ENCODE measurements at regions of chr5 and their contacts with region 1.

Region 1: GRCh38 chr5:91419571-91420537 is 36.7 kb upstream of the ARRDC3 start:
- DNase-seq: peak; percentile 74
- H3K4me3 Mint-ChIP-seq: no peak overlapping the region
- H3K27ac Mint-ChIP-seq: no peak overlapping the region
- H3K4me1 Mint-ChIP-seq: no peaks in the 10 kb centered on the region
- H3K27me3 Mint-ChIP-seq: no peaks in the 10 kb centered on the region

Region 2: GRCh38 chr5:90740244-90740799 is 679.5 kb before region 1 on chr5:
- CTCF ChIA-PET with region 1: no interaction called
- POLR2A ChIA-PET with region 1: no interaction called
- intact Hi-C with region 1: no loop called
- DNase-seq: no peak
- H3K4me3 Mint-ChIP-seq: no peak overlapping the region
- H3K27ac Mint-ChIP-seq: no peak overlapping the region
- H3K4me1 Mint-ChIP-seq: no peaks in the 10 kb centered on the region
- H3K27me3 Mint-ChIP-seq: peaks cover 2% of the 10 kb centered on the region

Region 3: DNA sequence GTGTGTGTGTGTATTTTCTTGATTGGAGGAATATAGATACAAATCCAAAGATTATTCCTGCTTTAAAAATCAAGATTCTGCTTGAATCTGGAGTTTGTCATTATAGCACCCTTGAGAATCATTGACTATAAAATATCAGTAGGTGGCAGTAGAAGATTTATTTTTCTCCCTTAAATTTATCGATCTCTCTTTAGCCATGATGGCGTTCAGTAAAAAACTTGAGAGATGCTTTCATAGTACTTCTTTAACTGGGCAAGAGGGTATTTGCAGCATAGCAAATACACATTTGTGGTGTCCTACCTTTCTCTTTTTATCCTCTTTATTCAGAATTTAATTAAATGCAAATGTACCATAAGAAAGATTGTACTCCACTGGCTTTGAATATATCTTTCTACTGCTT is 553.5 kb before region 1 on chr5:
- CTCF ChIA-PET with region 1: interaction called, 45 read pairs
- POLR2A ChIA-PET with region 1: no interaction called
- intact Hi-C with region 1: loop called (anchors 1 kb)
- DNase-seq: no peak
- H3K4me3 Mint-ChIP-seq: no peak overlapping the region
- H3K27ac Mint-ChIP-seq: no peak overlapping the region
- H3K4me1 Mint-ChIP-seq: peaks cover 6% of the 10 kb centered on the region
- H3K27me3 Mint-ChIP-seq: peaks cover 14% of the 10 kb centered on the region

Region 4: GRCh38 chr5:91101600-91102379 is 318.1 kb before region 1 on chr5:
- CTCF ChIA-PET with region 1: interaction called, 10 read pairs
- POLR2A ChIA-PET with region 1: no interaction called
- intact Hi-C with region 1: loop called (anchors 1 kb)
- DNase-seq: peak; percentile 61
- H3K4me3 Mint-ChIP-seq: no peak overlapping the region
- H3K27ac Mint-ChIP-seq: no peak overlapping the region
- H3K4me1 Mint-ChIP-seq: no peaks in the 10 kb centered on the region
- H3K27me3 Mint-ChIP-seq: peaks cover 2% of the 10 kb centered on the region

Region 5: GRCh38 chr5:91225848-91226686 is 193.8 kb before region 1 on chr5:
- CTCF ChIA-PET with region 1: interaction called, 74 read pairs
- POLR2A ChIA-PET with region 1: no interaction called
- intact Hi-C with region 1: loop called (anchors 1 kb)
- DNase-seq: peak; percentile 73
- H3K4me3 Mint-ChIP-seq: no peak overlapping the region
- H3K27ac Mint-ChIP-seq: peak overlapping the region; percentile 13
- H3K4me1 Mint-ChIP-seq: peaks cover 4% of the 10 kb centered on the region
- H3K27me3 Mint-ChIP-seq: peaks cover 7% of the 10 kb centered on the region

Region 6: GRCh38 chr5:91408710-91409109 is 11.1 kb before region 1 on chr5:
- CTCF ChIA-PET with region 1: interaction called, 19 read pairs
- POLR2A ChIA-PET with region 1: no interaction called
- intact Hi-C with region 1: no loop called
- DNase-seq: no peak
- H3K4me3 Mint-ChIP-seq: no peak overlapping the region
- H3K27ac Mint-ChIP-seq: no peak overlapping the region
- H3K4me1 Mint-ChIP-seq: no peaks in the 10 kb centered on the region
- H3K27me3 Mint-ChIP-seq: no peaks in the 10 kb centered on the region

Measured in activated CD4-positive, alpha-beta memory T cell treated with anti-CD3 and anti-CD28 coated beads for 36 hours (primary cell).